Left ventricle myocardium superior (tissue), 1 donor: ENCODE measurements at regions of chr4 and their contacts with region 1.

Region 1: DNA sequence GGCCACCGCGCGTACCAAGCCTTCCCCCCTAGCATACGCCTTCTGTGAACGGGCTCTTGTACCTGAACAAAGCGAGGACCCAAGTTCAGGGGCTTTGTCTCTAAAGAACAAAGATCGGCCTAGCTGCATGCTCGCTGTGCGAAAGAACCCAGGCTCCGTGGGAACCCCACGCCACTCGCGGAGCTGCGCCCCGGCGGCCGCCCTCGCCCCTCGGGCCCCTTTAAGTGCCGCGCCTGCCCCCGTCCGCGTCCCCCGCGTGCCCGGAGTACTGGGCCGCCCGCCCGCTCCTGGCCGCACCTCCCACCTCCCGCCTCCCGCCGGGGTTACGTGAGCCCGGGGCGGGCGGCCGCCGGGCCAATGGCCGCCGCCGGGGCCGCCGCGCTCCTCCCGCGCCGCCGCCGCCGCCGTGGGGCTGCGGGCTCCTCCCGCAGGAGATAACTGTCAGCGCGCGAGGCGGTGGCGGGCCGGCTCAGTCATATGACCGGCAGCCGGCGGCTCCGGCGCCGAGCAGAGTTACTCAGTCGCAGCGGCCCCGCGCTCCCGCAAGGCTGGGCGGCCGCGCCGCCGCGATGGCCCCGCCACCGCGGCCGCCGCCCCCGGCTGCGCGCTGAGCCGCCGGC is at the start of gene FNIP2:
- DNase-seq: peak; percentile 93
- ATAC-seq: peak; percentile 96
- total RNA-seq, gene FNIP2: 50.7 TPM

Region 2: GRCh38 chr4:158729716-158730559 is 38.7 kb before region 1 on chr4:
- intact Hi-C with region 1: loop called (anchors 5 kb)
- DNase-seq: peak; percentile 52
- ATAC-seq: peak; percentile 94

Region 3: DNA sequence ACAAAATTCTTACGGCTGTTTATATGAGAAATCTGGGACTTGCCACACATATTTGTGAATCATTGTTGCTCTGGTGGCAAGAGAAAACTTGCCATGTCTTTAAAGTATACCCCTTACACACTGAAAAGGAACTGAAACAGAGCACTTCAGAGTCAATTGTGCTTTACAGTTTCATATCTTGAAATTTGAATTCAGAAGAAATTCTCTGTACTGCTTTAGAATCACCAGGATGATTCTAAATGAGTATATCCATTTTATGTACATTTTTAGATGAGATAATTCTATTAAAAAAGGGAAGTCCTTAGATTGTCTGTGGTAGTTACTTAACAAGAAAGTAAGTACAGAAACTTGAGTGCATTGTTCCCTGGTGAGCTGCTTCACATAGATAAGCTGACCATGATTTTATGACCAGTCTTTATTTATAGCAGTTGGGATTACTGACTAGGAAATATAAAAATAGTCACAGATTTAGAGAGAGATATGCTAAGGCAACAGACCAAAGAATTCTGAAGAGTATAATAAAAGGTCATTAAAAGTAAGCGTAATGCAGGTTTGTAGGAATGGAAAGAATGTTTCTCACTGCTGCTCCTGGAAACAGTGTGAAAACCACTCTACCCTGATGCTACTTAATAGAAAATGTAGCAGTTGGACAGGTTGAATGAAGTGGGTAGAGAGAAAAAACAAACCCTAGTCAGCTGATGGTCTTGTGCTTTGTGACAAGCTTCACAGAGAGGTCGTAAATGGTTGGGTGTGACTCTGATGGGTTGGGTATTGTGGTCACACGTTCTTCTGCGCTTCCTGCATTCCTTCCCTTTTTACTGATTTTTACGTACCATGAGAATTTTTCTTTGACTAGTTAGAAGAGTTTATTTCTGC is 41.2 kb after region 1 on chr4:
- intact Hi-C with region 1: loop called (anchors 5 kb)
- DNase-seq: no peak
- ATAC-seq: peak; percentile 62

Region 4: DNA sequence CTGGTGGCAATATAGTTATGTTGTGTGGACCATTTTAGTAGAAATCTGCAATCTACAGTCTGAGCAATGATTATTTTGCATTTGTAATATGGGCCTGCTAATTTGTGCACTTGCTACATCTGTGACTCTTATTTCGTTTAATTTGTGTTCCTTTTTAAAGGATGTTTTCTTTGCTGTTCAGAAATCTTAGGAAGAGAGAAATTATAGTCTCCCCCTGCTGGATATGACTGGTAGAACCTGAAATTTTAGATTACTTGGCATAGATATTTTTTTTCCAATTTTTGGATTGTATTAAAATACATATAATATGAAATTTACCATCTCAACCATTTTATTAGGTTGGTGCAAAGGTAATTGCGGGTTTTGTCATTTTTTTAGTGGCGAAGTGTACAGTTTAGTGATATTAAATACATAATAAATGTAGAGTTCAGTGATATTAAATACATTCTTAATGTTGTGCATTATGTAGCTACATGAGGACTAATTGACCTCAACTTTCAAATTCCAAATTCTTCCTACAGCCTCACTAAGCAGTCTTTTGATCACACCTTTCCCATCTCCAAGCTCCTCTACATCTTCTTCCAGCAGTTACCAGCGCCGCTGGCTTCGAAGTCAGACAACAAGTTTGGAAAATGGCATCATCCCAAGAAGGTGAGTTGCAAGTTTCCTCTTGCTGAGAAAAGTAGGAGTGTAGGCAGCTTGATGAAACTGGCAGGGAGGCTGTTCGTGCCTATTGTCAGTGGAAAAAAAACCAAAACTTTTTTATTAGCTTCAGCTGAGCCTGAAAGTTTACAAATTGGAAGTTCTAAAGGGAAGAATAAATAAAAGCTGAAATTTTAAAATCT is 82.4 kb after region 1 on chr4:
- intact Hi-C with region 1: loop called (anchors 5 kb)
- DNase-seq: no peak
- ATAC-seq: no peak